ENCODE measurements at regions of chr18 and their contacts with region 1.

Region 1: GRCh38 chr18:36023336-36023735 is 44.0 kb downstream of the RPRD1A start:
- DNase-seq: no peak
- H3K4me3 ChIP-seq: no peak overlapping the region
- H3K4me3 Mint-ChIP-seq: no peak overlapping the region
- H3K27ac ChIP-seq: no peak overlapping the region
- H3K27ac Mint-ChIP-seq: no peak overlapping the region
- H3K4me1 ChIP-seq: no peaks in the 10 kb centered on the region
- H3K4me1 Mint-ChIP-seq: peaks cover 0 to 3% (median 1%) of the 10 kb centered on the region in 4 donors
- H3K27me3 ChIP-seq: no peaks in the 10 kb centered on the region
- H3K27me3 Mint-ChIP-seq: no peaks in the 10 kb centered on the region

Region 2: DNA sequence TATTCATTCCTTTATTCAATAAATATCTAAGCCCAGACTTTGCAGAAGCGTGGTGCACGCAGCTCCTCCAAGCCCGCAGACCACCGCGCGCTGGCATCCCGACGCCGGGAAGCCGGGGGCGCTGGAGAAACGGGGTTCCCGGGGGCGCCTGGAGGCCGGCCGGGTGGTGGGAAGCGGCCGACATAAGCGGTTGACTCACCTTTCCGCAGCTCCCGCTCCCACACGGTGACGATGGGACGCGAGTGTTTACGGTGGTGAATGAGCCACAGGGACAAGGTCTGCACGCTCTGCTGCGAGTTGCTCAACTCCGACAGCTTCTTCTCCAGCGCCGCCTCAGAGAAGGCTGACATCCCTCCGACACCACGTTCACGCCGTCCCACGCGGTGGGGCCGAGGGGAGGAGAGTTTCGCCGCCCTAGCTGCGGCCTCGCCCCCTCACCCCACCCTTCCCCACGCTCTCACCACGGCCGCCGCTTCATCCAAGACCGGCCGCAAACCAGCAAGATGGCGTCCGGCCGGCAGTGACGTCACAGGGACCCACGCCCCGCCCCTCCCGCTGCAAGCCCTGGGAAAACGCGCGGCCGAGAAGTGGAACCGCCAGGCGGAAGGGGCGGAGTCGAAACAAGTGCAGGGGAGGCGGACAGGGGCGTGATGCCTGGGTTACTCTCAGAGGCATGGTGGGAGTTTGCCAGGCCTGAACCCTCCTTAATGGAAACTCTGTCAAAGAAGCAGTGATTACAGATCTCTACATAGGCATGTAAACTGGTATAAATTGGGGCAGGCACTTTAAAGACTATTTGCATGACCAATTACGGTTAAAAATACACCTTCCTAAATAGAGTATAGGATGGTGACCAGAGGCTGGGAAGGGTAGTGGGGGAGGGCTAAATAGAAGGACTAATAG is 44.0 kb after region 1 on chr18 and contains the start of gene RPRD1A:
- CTCF ChIA-PET with region 1: interaction called, 9 read pairs
- POLR2A ChIA-PET with region 1: no interaction called
- intact Hi-C with region 1: loop called (anchors 5 kb)
- DNase-seq: peak; percentile 94 to 97 (median 94)
- H3K4me3 ChIP-seq: peak within 1 kb of the TSS; percentile 81 to 87
- H3K4me3 Mint-ChIP-seq: peak within 1 kb of the TSS; percentile 92 to 98 (median 95)
- H3K27ac ChIP-seq: peak within 1 kb of the TSS; percentile 74
- H3K27ac Mint-ChIP-seq: peak within 1 kb of the TSS; percentile 89 to 98 (median 96)
- H3K4me1 ChIP-seq: peaks cover 32% of the 10 kb centered on the region
- H3K4me1 Mint-ChIP-seq: peaks cover 31 to 48% (median 40%) of the 10 kb centered on the region in 4 donors
- H3K27me3 ChIP-seq: no peaks in the 10 kb centered on the region
- H3K27me3 Mint-ChIP-seq: peaks cover 0 to 1% of the 10 kb centered on the region in 2 donors
- total RNA-seq, gene RPRD1A: 40.1 to 42.3 TPM